BJ (cell line): ENCODE measurements at regions of chr19 and their contacts with region 1.

Region 1: DNA sequence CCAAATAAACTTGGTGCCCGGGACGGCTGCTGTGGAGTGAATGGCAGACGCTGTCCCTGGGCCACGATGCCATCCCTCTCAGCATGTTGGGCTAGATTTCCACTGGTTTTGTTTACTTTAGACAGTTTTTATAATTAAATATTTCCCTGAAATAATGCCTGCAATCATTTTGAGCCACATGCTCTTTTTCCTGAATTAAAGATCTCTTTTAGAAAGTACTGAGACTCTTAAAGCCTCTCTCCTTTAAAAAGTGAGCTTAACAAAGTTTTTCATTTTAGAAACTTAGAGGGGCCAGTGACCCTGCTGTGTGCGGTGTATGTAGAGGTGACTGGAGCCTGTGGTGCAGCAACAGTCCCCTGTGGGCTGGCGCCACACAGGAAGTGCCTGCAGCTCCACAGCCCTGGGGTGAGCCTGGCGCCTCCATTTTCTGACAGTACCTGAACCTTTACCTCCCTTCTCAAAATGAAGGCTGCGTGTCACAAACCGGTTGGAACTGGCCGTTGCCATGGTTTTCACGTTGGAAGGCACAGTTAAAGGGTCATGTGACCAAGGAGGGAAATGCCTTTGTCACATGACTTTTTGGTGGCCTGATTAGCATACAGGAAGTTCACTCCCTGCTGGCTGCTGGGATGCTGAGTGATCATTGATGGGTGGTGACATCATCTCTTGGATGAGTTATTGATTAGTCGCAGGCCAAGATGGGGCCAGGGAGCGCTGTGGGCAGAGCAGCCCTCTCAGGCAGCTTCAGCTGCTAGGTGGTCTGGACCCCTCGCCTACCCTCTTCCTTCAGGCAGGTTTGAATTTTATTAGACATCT is 26.3 kb downstream of the TSSK6 start:
- DNase-seq: peak; percentile 74
- H3K4me3 ChIP-seq: no peak overlapping the region
- H3K27me3 ChIP-seq: no peaks in the 10 kb centered on the region
- CTCF ChIP-seq: no peak

Region 2: GRCh38 chr19:19361075-19361594 is 127.9 kb before region 1 on chr19:
- CTCF ChIA-PET with region 1: interaction called, 189 read pairs
- POLR2A ChIA-PET with region 1: interaction called, 5 read pairs
- DNase-seq: peak; percentile 37
- H3K4me3 ChIP-seq: no peak overlapping the region
- H3K27me3 ChIP-seq: no peaks in the 10 kb centered on the region
- CTCF ChIP-seq: peak; percentile 81

Region 3: DNA sequence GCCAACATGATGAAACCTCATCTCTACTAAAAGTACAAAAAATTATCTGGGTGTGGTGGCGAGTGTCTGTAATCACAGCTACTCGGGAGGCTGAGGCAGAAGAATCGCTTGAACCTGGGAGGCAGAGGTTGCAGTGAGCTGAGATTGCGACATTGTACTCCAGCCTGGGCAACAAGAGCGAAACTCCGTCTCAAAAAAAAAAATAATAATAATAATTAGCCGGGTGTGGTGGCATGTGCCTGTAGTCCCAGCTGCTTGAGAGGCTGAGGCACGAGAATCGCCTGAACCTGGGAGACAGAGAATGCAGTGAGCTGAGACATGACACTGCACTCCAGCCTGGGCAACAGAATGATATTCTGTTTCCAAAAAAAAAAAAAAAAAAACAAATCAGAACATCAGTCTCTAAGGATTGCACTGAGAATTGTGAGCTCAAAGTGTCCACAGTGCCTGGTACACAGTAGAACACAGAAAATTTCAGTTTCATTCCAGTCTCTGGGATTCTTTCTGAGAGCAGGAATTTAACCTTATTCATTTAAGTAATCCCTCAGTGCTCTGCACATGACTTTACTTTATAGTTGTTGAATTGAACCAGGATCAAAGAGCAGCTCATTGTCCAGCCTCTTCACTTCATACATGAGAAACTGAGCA is 109.7 kb before region 1 on chr19:
- CTCF ChIA-PET with region 1: interaction called, 10 read pairs
- POLR2A ChIA-PET with region 1: no interaction called
- DNase-seq: no peak
- H3K4me3 ChIP-seq: no peak overlapping the region
- H3K27me3 ChIP-seq: no peaks in the 10 kb centered on the region
- CTCF ChIP-seq: no peak

Region 4: DNA sequence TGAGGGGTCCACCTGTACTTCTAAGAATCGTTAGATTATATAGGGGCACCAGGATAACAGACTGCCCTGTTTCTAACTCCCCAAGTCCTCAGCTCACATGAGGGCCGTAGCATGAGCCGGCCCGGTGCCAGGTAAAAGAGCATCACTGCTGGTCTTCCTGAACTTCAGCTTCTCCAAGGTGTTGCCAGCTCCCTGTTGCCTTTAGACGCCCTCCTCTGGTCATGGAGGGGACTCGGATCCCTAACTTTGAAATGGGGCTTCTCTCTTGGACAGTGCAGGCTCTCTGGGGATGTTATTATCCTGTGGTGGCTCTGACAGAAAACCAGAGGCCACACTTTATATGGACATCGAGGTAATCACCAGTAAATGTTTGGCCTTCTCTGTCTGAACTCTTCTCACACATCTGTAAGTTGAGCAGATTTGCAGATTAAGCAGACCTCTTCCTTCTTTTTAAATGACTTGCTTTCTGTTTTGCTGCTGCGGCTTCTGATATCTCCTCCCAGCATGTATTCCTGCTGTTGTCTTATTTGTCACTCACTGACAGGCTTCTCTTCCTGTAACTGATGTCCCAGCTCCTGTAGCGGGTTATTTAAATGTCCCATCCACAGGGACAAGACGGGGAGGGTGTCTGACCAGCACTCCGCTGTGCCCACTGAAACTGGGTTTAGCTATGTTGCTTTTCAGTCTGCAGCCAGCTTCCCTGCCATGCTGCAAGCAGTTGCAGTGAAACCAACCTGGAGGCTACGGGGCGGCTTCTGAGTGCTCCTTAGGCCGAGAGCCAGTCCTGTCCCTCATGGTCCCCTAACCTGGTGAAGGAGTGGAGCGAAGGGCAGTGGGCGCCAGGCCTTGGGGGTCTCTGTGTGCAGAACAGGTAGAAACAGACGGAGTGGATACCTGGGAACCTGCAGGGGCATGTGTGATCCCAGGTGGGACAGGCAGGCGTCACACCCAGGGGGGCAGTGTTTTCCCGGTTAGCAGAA is 12.9 kb before region 1 on chr19:
- CTCF ChIA-PET with region 1: interaction called, 18 read pairs
- POLR2A ChIA-PET with region 1: no interaction called
- DNase-seq: no peak
- H3K4me3 ChIP-seq: no peak overlapping the region
- H3K27me3 ChIP-seq: no peaks in the 10 kb centered on the region
- CTCF ChIP-seq: peak; percentile 59

Region 5: DNA sequence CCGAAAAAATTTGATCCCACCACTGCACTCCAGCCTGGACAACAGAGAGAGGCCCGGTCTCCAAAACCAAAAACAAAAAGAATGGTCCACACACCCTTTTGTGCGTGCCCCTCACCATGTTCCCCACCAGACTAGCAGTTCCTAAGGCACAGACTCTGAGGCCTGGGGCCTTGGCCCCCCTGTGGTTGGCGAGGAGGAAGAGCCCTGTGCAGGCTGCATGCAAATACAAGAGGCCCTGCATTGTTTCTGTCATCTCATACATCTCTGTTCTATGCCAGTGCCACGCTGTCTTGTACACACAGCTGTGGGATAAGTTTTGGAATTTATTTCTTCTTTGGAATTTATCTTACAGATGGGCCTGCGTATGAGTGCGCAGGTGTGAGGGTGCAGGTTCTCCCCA is 35.0 kb after region 1 on chr19:
- CTCF ChIA-PET with region 1: no interaction called
- POLR2A ChIA-PET with region 1: no interaction called
- DNase-seq: no peak
- H3K4me3 ChIP-seq: no peak overlapping the region
- H3K27me3 ChIP-seq: no peaks in the 10 kb centered on the region
- CTCF ChIP-seq: no peak

Region 6: GRCh38 chr19:19540715-19541440 is 51.8 kb after region 1 on chr19:
- CTCF ChIA-PET with region 1: no interaction called
- POLR2A ChIA-PET with region 1: no interaction called
- DNase-seq: no peak
- H3K4me3 ChIP-seq: peak overlapping the region; percentile 19
- H3K27me3 ChIP-seq: peaks cover 3% of the 10 kb centered on the region
- CTCF ChIP-seq: no peak